Ascending aorta (tissue), 2 donors: ENCODE measurements at regions of chr12 and their contacts with region 1.

Region 1: GRCh38 chr12:96399919-96400797 is at the start of gene CDK17:
- DNase-seq: peak; percentile 20 to 91
- H3K4me3 ChIP-seq: peak within 1 kb of the TSS; percentile 78 to 82
- H3K27ac ChIP-seq: peak within 1 kb of the TSS; percentile 100
- H3K4me1 ChIP-seq: peaks cover 0 to 17% of the 10 kb centered on the region in 2 donors
- H3K27me3 ChIP-seq: no peaks in the 10 kb centered on the region
- CTCF ChIP-seq: peak; percentile 24 to 39 (median 34)
- total RNA-seq, gene CDK17: 49.7 TPM

Region 2: GRCh38 chr12:96061864-96062453 is 338.2 kb before region 1 on chr12:
- intact Hi-C with region 1: loop called (anchors 5 kb)
- DNase-seq: peak in 1 of 2 donors; percentile 86
- H3K4me3 ChIP-seq: no peak overlapping the region
- H3K27ac ChIP-seq: no peak overlapping the region
- H3K4me1 ChIP-seq: peaks cover 0 to 3% of the 10 kb centered on the region in 2 donors
- H3K27me3 ChIP-seq: no peaks in the 10 kb centered on the region
- CTCF ChIP-seq: peak; percentile 71 to 83 (median 81)

Region 3: DNA sequence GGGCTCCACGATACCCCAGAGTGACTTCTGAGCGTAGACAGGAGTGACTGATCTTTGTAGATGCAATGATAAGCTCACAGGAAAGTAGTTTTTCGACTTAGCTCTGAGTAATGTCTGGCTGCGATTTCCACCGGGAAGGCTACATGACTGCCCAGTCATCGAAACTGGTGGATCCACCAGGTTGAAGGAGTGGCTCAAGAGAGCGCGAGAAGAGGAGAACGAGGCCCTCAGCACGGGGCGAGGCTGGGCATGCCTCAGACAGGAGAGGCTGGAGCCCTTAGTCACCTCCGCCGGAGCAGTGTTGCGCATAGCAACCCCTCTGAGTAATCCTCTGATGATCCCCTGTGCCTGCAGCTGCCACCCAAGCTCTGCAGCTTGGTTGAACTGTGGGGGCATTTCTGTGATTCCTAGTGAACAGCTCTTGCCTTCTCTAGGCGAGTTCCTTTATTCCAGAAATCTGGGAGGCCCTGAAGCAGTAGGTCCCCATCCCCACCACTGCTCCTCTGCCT is 180.4 kb before region 1 on chr12:
- intact Hi-C with region 1: loop called (anchors 5 kb)
- DNase-seq: peak in 1 of 2 donors; percentile 63
- H3K4me3 ChIP-seq: no peak overlapping the region
- H3K27ac ChIP-seq: no peak overlapping the region
- H3K4me1 ChIP-seq: peaks cover 0 to 8% of the 10 kb centered on the region in 2 donors
- H3K27me3 ChIP-seq: no peaks in the 10 kb centered on the region
- CTCF ChIP-seq: no peak

Region 4: DNA sequence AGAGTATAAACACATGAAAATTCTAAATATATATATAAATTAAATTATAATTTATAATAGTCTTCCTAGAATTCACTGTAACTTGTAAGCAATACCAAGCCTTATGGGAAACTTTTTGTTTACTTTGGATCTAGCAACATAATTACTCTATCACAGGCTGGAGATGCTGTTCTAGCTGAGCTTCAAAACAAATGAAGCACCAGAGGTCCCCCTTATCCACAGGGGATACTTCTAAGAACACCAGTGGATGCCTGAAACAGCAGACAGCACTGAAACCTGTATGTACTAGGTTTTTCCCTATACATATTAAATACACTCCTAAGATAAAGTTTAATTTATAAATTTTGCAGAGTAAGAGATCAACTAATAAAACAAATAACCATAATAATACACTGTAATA is 96.5 kb before region 1 on chr12:
- intact Hi-C with region 1: loop called (anchors 5 kb)
- DNase-seq: no peak
- H3K4me3 ChIP-seq: no peak overlapping the region
- H3K27ac ChIP-seq: no peak overlapping the region
- H3K4me1 ChIP-seq: no peaks in the 10 kb centered on the region
- H3K27me3 ChIP-seq: no peaks in the 10 kb centered on the region
- CTCF ChIP-seq: no peak

Region 5: DNA sequence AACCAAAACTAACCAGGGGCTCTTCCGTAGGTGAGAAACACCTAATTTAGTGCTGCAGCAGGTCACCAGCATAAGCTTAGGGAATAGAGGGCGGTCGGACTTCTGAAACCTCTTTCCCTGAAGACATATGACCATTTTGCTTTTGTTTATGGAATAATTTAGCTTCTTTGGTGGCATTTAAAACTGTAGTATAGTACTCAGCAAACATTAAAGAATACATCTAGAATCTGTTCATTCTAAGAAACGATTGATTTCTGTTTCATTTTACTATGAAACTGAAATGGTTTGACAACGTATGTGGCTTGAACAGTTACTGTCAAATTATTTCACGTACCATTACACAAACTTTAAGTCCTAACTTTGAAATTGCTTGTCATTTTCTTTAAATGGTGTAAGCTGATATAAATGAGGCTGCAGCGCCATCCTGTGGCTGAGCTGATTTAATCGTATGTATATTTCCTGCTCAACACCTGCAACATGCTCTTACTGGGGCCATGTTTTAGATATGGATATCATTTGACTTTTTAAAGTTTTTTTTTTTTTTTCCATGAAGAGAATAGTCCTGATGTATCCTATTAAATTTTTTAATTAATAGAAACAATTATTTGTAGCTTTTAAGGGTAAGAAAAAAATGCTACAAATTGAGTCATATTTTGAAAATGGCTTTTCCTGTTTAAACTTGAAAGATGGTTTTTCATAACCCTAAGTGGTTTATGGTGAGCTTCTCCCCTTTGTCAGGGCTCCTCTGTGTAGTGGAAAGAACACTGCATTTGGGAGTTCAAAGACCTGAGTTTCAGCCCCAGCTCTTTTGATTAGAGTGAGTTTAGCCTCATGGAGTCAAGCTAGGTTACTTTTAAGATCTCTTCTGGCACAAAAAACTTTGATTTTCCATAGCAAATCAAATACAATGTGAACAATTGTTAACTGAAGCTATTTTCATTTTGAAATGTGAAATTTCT is 116.6 kb after region 1 on chr12:
- intact Hi-C with region 1: loop called (anchors 5 kb)
- DNase-seq: peak in 1 of 2 donors; percentile 82
- H3K4me3 ChIP-seq: no peak overlapping the region
- H3K27ac ChIP-seq: no peak overlapping the region
- H3K4me1 ChIP-seq: no peaks in the 10 kb centered on the region
- H3K27me3 ChIP-seq: no peaks in the 10 kb centered on the region
- CTCF ChIP-seq: peak; percentile 49 to 51 (median 50)